AG04449 (cell line): ENCODE measurements at regions of chr10 and their contacts with region 1.

Region 1: DNA sequence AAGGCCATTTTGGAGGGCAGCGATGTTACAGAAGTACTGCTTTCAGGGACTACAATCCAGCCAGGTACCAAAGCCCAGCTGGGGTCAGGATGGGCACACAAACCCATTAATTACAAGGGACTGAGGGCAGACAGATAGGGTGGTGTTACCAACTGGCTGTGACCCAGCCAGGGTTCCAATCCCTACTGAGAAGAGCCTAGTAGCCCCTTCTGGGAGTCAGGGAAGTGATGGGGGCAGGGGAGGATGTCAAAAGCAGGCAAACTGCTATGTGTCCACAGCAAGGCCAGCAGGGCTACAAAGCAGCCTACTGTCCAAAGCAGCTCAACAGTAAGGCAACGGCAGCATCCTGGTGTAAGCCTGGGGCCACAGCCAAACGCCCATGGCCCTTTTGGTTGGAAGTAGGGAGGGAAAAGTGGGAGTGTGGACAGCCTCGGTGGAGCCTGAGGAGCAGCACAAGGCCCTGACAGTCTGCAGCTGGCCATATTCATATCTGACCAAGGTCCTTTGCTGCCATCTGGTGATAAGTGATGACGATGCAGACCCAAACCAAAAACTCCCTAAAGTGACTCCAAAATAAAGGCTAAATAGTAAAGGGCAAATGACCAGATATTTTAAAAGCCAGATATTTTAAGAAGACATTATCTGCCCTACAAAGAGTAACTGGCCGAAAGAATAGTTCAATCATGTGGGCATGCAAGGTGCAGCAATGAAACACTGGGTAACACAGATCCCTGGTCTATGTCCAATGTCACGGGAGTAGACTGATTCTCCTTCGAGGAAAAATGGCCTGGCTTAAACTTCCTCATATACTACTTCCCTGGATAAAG is 56.9 kb downstream of the XPNPEP1 start:
- DNase-seq: no peak
- H3K4me3 ChIP-seq: no peak overlapping the region
- CTCF ChIP-seq: no peak

Region 2: GRCh38 chr10:109487691-109488090 is 378.7 kb before region 1 on chr10:
- CTCF ChIA-PET with region 1: no interaction called
- POLR2A ChIA-PET with region 1: no interaction called
- DNase-seq: no peak
- H3K4me3 ChIP-seq: no peak overlapping the region
- CTCF ChIP-seq: no peak

Region 3: DNA sequence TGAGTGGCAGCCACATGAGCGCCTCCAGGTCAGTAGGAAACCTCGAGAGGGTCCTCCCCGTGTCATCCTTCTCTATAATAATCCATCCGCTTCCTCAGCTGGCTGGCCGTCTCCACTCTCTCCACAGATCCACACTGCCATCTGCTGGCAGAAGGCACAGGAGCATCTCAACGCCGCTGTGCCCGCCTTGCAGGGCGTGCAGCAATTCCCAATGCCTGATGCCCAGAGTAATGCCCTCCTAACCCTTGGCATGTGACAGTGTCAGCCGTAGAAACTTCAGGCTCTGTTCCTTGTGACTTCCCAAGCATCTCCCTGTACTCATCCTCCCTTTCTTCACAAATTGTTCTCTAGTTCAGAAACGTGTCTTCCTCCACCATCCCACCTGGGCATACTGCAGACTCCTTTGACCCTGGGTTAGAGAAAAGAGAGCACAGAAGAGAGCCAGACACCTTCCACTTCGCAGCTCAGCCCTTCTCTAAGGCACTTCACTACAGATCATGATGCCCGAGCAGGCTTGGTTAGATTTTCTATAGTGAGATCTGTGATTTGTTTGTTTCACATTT is 13.8 kb before region 1 on chr10:
- CTCF ChIA-PET with region 1: interaction called, 19 read pairs
- POLR2A ChIA-PET with region 1: no interaction called
- DNase-seq: no peak
- H3K4me3 ChIP-seq: no peak overlapping the region
- CTCF ChIP-seq: peak; percentile 96

Region 4: GRCh38 chr10:109956454-109957091 is 90.2 kb after region 1 on chr10:
- CTCF ChIA-PET with region 1: no interaction called
- POLR2A ChIA-PET with region 1: no interaction called
- DNase-seq: no peak
- H3K4me3 ChIP-seq: no peak overlapping the region
- CTCF ChIP-seq: peak; percentile 47

Region 5: GRCh38 chr10:109966961-109967738 is 100.8 kb after region 1 on chr10:
- CTCF ChIA-PET with region 1: no interaction called
- POLR2A ChIA-PET with region 1: no interaction called
- DNase-seq: no peak
- H3K4me3 ChIP-seq: peak overlapping the region; percentile 7; the same call in 1 of the 2 replicates
- CTCF ChIP-seq: no peak